Activated T-helper 1 cell treated with anti-CD3 and anti-CD28 coated beads, Interleukin-12 subunit alpha, Interleukin-12 subunit beta, Interleukin-2, Interleukin-4 antibody, amounts not matched to agents 30 ng/mL and 10 ng/mL and 1 ng/mL, durations not matched to agents 14 hours and 24 hours and 36 hours (primary cell): ENCODE measurements at regions of chr16 and their contacts with region 1.

Region 1: GRCh38 chr16:28863929-28864793 is 518 bp downstream of the SH2B1 start:
- DNase-seq: no peak
- H3K4me3 Mint-ChIP-seq: peak overlapping the region; percentile 93
- H3K27ac Mint-ChIP-seq: peak overlapping the region; percentile 94
- H3K4me1 Mint-ChIP-seq: peaks cover 21% of the 10 kb centered on the region
- H3K27me3 Mint-ChIP-seq: no peaks in the 10 kb centered on the region

Region 2: GRCh38 chr16:28823872-28824716 is 40.1 kb before region 1 on chr16:
- intact Hi-C with region 1: loop called (anchors 1 kb)
- DNase-seq: peak; percentile 93
- H3K4me3 Mint-ChIP-seq: peak overlapping the region; percentile 98
- H3K27ac Mint-ChIP-seq: peak overlapping the region; percentile 100
- H3K4me1 Mint-ChIP-seq: peaks cover 52% of the 10 kb centered on the region
- H3K27me3 Mint-ChIP-seq: peaks cover 4% of the 10 kb centered on the region

Region 3: DNA sequence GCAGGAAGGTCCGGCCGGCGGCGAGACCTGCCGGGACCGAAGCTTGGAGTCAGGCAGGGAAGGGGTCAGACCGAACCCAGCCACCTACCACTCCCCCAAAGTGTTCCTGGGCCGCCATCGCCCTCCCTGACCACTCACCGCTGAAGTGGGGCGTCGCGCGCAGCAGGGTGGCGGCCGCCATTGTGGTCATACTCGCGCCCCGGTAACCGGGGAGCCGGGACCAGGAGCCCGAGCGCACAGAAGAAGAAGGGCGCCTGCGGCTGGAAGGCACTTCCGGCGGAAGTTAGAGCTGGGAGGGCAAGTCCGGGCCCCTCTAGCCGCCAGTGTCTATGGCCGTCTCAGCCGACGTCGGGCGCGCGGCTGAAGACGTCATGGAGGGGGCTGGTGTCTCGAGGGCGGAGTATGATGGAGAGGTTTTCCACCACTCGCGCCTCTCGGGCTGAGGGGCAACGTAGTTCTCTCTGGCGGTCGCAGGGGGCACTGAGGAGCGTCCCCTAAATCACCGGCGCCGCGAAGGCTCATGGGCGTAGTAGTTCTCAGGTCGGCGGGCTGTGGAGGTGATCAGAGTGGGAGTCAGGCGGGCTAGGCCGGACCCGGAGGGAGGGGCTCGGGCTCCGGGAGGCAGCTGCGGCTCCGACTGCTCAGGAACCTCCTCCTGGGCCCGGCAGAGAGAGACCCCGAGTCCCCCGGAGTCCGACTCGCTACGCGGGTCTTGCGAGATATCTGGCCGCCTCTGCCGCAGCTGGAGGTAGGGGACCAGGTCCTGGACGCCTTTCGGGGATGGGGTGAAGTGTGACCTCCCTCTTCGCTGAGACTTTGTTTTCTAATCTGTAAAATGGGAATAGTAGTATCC is 17.9 kb before region 1 on chr16 and contains the start of gene TUFM:
- intact Hi-C with region 1: loop called (anchors 1 kb)
- DNase-seq: peak; percentile 97
- H3K4me3 Mint-ChIP-seq: peak within 1 kb of the TSS; percentile 96
- H3K27ac Mint-ChIP-seq: peak within 1 kb of the TSS; percentile 94
- H3K4me1 Mint-ChIP-seq: peaks cover 12% of the 10 kb centered on the region
- H3K27me3 Mint-ChIP-seq: no peaks in the 10 kb centered on the region
- total RNA-seq, gene TUFM: 261 and 264 TPM in 2 replicates

Region 4: GRCh38 chr16:28879841-28880588 is 15.9 kb after region 1 on chr16:
- intact Hi-C with region 1: loop called (anchors 1 kb)
- DNase-seq: peak; percentile 80
- H3K4me3 Mint-ChIP-seq: peak overlapping the region; percentile 91
- H3K27ac Mint-ChIP-seq: peak overlapping the region; percentile 70
- H3K4me1 Mint-ChIP-seq: peaks cover 18% of the 10 kb centered on the region
- H3K27me3 Mint-ChIP-seq: peaks cover 2% of the 10 kb centered on the region

Region 5: DNA sequence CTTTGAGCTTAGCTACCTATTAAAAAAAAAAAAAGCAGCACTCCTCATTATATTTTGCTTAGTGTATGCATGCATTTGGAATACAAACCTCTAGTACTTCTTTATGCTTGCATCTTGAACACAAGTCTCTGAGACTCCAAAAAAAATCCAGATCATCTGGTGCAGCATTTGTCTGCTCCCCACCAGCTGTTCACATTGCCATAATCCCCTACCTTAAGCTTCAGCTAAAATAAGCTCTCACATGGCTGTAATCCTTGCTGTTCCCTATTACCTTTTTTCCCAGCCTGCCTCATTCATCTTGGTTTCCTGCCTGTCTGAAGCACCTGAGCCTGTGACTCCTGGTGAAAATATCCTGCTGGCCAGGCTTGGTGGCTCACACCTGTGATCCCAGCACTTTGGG is 79.1 kb after region 1 on chr16:
- intact Hi-C with region 1: loop called (anchors 1 kb)
- DNase-seq: no peak
- H3K4me3 Mint-ChIP-seq: no peak overlapping the region
- H3K27ac Mint-ChIP-seq: no peak overlapping the region
- H3K4me1 Mint-ChIP-seq: peaks cover 18% of the 10 kb centered on the region
- H3K27me3 Mint-ChIP-seq: no peaks in the 10 kb centered on the region

Region 6: DNA sequence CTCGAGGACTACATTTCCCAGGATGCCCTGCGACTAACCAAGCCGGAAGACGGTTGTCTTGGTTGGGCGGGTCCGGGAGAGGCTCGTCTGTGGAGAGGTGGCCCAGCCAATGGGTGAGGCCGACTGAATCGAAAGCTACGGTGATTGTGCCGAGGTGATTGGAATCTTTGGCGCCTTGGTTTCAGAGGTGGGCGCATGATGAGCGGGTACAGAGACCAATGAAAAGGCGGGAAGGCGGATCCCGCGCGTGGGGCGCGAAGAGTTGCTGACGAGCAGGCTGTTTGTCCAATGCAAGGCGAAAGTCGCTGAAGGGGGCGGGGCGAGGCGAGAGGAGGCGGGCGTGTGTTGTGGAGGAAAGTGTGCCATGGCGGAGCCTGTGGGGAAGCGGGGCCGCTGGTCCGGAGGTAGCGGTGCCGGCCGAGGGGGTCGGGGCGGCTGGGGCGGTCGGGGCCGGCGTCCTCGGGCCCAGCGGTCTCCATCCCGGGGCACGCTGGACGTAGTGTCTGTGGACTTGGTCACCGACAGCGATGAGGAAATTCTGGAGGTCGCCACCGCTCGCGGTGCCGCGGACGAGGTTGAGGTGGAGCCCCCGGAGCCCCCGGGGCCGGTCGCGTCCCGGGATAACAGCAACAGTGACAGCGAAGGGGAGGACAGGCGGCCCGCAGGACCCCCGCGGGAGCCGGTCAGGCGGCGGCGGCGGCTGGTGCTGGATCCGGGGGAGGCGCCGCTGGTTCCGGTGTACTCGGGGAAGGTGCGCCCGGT is 86.7 kb after region 1 on chr16 and contains the start of gene NFATC2IP:
- intact Hi-C with region 1: loop called (anchors 1 kb)
- DNase-seq: peak; percentile 99
- H3K4me3 Mint-ChIP-seq: peak within 1 kb of the TSS; percentile 95
- H3K27ac Mint-ChIP-seq: peak within 1 kb of the TSS; percentile 95
- H3K4me1 Mint-ChIP-seq: peaks cover 33% of the 10 kb centered on the region
- H3K27me3 Mint-ChIP-seq: no peaks in the 10 kb centered on the region
- total RNA-seq, gene NFATC2IP: 110 and 111 TPM in 2 replicates